CD8-positive, alpha-beta memory T cell (primary cell): ENCODE measurements at regions of chr17 and their contacts with region 1.

Region 1: DNA sequence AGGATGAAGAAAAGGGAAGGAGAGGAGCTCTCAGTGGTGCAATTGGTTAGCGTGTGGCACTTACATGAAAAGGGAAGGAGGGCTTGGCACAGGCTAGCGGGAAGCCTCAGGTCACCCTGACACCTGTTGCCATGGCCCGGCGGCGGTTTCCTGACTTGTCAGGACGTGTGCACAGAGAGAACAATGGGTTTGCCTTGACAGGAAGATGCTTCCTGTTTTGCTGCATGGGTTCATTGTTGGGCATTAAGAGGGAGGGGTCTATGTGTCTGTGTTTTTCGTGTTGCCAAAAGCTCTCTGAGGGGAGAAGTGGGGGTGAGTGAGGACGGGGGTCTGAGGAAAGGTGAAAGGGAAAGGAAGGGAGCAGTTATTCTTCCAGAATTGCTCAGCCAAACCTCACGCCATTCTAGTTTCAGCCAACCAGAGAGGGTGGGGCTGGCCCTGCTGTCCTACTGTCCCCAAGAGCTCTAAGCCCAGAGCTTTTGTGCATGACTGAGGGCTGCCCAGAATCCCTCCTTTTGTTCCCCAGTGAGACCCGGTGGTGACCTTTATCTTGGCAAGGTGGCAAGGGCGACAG is 17.1 kb upstream of the CCR7 start:
- DNase-seq: peak in 4 of 5 donors; percentile 24 to 88 (median 74)
- H3K4me3 ChIP-seq: peak overlapping the region; percentile 46
- H3K4me3 Mint-ChIP-seq: peak overlapping the region; percentile 1 to 78 (median 77)
- H3K27ac ChIP-seq: peak overlapping the region; percentile 19
- H3K27ac Mint-ChIP-seq: peak overlapping the region; percentile 68 to 94 (median 89)
- H3K4me1 ChIP-seq: peaks cover 61% of the 10 kb centered on the region
- H3K4me1 Mint-ChIP-seq: peaks cover 57 to 95% (median 84%) of the 10 kb centered on the region in 3 donors
- H3K27me3 ChIP-seq: no peaks in the 10 kb centered on the region
- H3K27me3 Mint-ChIP-seq: no peaks in the 10 kb centered on the region

Region 2: DNA sequence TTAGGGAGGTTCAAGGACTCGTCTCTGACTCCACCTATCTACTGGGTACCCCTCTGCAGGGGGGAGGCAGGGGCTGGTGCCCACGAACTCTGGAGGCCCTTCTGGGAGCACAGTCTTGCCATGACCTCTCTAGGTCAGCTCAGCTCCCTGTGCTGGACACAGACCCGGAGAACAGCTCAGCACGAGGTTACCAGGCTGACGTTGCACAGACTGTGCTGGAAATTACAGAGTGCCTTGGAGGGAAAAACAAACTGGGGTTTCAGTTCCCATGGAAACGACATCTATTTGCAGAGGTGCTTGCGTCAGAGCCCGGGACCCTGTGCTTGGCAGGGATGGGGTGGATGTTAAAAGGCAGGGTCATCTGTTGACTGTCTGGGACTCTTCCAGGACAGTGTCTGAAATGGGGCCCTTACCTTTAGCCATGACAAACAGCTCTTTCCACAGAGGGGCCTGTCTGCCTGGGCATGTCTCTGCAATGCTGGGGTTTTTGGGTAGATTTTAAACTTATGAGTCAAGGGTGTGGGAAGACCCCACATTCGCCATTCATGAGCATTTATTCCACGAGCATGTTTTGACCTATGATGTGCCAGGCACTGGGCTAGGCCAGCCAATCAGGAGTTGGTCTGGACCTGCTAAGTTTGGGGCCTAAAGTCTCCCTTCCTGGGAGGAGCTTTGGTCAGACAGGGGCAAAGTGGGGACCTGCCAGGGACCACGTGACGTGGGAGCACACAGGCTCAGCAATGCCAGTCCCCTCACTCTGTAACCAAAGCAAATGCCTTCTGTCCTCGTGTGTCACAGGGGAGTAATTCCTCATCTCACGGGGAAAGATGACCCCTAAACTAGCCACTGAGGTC is 39.6 kb before region 1 on chr17:
- CTCF ChIA-PET with region 1: no interaction called
- POLR2A ChIA-PET with region 1: no interaction called
- DNase-seq: peak in 3 of 5 donors; percentile 33 to 64 (median 44)
- H3K4me3 ChIP-seq: peak overlapping the region; percentile 54
- H3K4me3 Mint-ChIP-seq: peak overlapping the region; percentile 77 to 86 (median 84)
- H3K27ac ChIP-seq: peak overlapping the region; percentile 72
- H3K27ac Mint-ChIP-seq: peak overlapping the region; percentile 95 to 100 (median 98)
- H3K4me1 ChIP-seq: peaks cover 92% of the 10 kb centered on the region
- H3K4me1 Mint-ChIP-seq: peaks cover 82 to 93% (median 89%) of the 10 kb centered on the region in 3 donors
- H3K27me3 ChIP-seq: no peaks in the 10 kb centered on the region
- H3K27me3 Mint-ChIP-seq: peaks cover 0 to 10% of the 10 kb centered on the region in 2 donors

Region 3: DNA sequence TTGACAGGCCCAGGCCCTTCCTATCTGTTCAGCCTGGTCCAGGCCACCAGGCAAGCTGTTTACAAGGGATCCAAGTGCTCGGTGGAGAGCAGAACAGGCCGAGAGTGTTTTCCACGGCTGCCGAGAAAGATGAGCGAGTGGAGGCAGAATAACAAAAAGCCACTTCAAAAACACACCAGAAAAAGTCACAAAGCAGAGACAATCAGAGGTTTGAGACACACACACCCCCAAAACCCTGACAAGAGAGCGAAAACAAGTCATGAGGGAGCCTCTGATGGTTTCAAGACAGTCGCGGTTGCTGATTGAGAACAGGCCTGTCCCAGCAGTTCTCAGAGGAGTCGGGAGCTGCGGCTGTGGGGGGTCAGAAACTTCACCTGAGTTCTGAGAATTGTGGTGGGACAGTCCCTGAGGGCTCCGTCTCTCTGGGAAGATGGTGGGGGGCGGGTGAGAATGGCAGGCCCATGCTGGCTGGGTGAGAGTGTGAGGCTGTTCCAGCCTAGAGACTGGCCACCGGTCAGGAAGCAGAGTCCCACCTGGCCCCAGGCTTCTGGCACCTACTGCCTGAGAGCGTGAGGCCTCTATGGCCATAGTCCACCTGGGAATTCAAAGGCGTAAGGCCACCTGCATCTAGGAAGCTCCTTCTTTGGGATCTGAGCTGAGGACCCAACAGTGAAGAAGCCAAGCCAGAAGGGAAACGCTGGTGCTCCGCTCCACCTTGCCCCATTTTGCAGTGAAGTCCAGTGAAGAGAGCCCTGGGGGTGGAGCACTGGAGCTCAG is 20.5 kb after region 1 on chr17:
- CTCF ChIA-PET with region 1: interaction called, 3 read pairs
- POLR2A ChIA-PET with region 1: interaction called, 12 read pairs
- DNase-seq: peak in 3 of 5 donors; percentile 65 to 91 (median 68)
- H3K4me3 ChIP-seq: peak overlapping the region; percentile 39
- H3K4me3 Mint-ChIP-seq: peak overlapping the region; percentile 7 to 83 (median 73)
- H3K27ac ChIP-seq: peak overlapping the region; percentile 41
- H3K27ac Mint-ChIP-seq: peak overlapping the region; percentile 96 to 100 (median 97)
- H3K4me1 ChIP-seq: peaks cover 100% of the 10 kb centered on the region
- H3K4me1 Mint-ChIP-seq: peaks cover 84 to 99% (median 99%) of the 10 kb centered on the region in 3 donors
- H3K27me3 ChIP-seq: no peaks in the 10 kb centered on the region
- H3K27me3 Mint-ChIP-seq: peaks cover 0 to 4% of the 10 kb centered on the region in 2 donors

Region 4: GRCh38 chr17:40622509-40622928 is 40.1 kb after region 1 on chr17:
- CTCF ChIA-PET with region 1: interaction called, 11 read pairs
- POLR2A ChIA-PET with region 1: no interaction called
- DNase-seq: peak in 2 of 5 donors; percentile 57 to 80
- H3K4me3 ChIP-seq: no peak overlapping the region
- H3K4me3 Mint-ChIP-seq: peak overlapping the region; percentile 24 to 65 (median 32)
- H3K27ac ChIP-seq: no peak overlapping the region
- H3K27ac Mint-ChIP-seq: peak overlapping the region; percentile 34 to 91 (median 82)
- H3K4me1 ChIP-seq: peaks cover 35% of the 10 kb centered on the region
- H3K4me1 Mint-ChIP-seq: peaks cover 25 to 49% (median 41%) of the 10 kb centered on the region in 3 donors
- H3K27me3 ChIP-seq: peaks cover 2% of the 10 kb centered on the region
- H3K27me3 Mint-ChIP-seq: no peaks in the 10 kb centered on the region